Vagina (tissue), 2 donors: ENCODE measurements at regions of chr7 and their contacts with region 1.

Region 1: GRCh38 chr7:154927624-154928143 is 75.2 kb downstream of the PAXIP1 start:
- DNase-seq: peak in 1 of 2 donors; percentile 89
- H3K4me3 ChIP-seq: peak overlapping the region; percentile 51 to 64
- H3K27ac ChIP-seq: peak overlapping the region; percentile 89
- H3K4me1 ChIP-seq: peaks cover 23% of the 10 kb centered on the region
- H3K27me3 ChIP-seq: no peaks in the 10 kb centered on the region
- CTCF ChIP-seq: peak; percentile 50 to 59 (median 51)
- POLR2A ChIP-seq: no peak

Region 2: GRCh38 chr7:155003376-155004214 is 75.9 kb after region 1 on chr7:
- intact Hi-C with region 1: loop called (anchors 5 kb)
- DNase-seq: no peak
- H3K4me3 ChIP-seq: peak overlapping the region; percentile 62 to 96
- H3K27ac ChIP-seq: peak overlapping the region; percentile 93
- H3K4me1 ChIP-seq: peaks cover 28% of the 10 kb centered on the region
- H3K27me3 ChIP-seq: no peaks in the 10 kb centered on the region
- CTCF ChIP-seq: no peak
- POLR2A ChIP-seq: peak in 1 of 2 donors; percentile 69

Region 3: GRCh38 chr7:155190688-155191087 is 263.0 kb after region 1 on chr7:
- intact Hi-C with region 1: loop called (anchors 10 kb)
- DNase-seq: no peak
- H3K4me3 ChIP-seq: no peak overlapping the region
- H3K27ac ChIP-seq: no peak overlapping the region
- H3K4me1 ChIP-seq: peaks cover 9% of the 10 kb centered on the region
- H3K27me3 ChIP-seq: no peaks in the 10 kb centered on the region
- CTCF ChIP-seq: peak; percentile 75 to 90 (median 76)
- POLR2A ChIP-seq: no peak